ENCODE measurements at regions of chr14 and their contacts with region 1.

Region 1: DNA sequence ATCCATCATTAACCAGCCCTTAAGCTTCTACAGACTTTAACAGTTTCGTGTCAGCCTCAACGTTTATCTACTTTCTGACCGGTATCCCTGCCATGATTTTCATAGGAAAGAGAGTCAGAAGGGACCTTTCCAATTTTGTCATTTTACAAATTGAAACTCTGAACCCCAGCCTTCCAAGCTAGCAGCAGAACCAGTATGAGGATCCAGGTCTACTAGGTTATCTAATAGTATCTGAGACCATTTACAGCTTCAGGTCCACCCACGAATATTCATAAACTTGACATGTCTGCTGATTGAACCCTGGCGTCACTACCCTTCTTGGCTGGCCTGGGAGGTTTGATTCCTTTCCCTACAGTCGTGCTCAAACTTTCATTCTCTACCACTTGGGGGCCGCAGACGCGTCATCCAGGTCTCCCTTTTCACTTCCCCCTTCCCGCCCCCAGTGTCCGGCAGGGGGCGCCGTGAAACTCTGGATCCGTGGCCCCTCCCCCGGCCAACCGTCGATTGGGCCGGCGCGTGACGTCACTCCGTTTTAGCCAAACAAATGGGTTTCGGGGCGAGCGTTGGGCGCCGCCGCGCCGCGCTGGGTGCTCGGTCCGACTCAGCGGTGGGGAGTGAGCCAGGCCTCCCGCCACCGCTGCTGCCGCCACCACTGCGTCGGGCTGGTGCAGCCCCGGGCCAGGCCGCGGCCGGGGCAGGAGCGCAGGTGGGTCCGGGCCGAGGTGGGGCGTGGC is at the start of gene FBXO34:
- DNase-seq: peak; percentile 100
- ATAC-seq: peak; percentile 89
- H3K4me3 Mint-ChIP-seq: peak within 1 kb of the TSS; percentile 90
- H3K27ac Mint-ChIP-seq: peak within 1 kb of the TSS; percentile 87
- H3K4me1 Mint-ChIP-seq: peaks cover 34% of the 10 kb centered on the region
- H3K27me3 Mint-ChIP-seq: no peaks in the 10 kb centered on the region
- CTCF ChIP-seq: peak; percentile 94
- total RNA-seq, gene FBXO34: 19.7 and 20.4 TPM in 2 replicates

Region 2: GRCh38 chr14:54509546-54510501 is 761.2 kb before region 1 on chr14 and contains the start of gene CGRRF1:
- CTCF ChIA-PET with region 1: no interaction called
- POLR2A ChIA-PET with region 1: no interaction called
- intact Hi-C with region 1: loop called (anchors 5 kb)
- DNase-seq: peak; percentile 98
- ATAC-seq: peak; percentile 98
- H3K4me3 Mint-ChIP-seq: peak within 1 kb of the TSS; percentile 95
- H3K27ac Mint-ChIP-seq: peak within 1 kb of the TSS; percentile 89
- H3K4me1 Mint-ChIP-seq: peaks cover 41% of the 10 kb centered on the region
- H3K27me3 Mint-ChIP-seq: no peaks in the 10 kb centered on the region
- CTCF ChIP-seq: no peak
- total RNA-seq, gene CGRRF1: 11.9 and 14.1 TPM in 2 replicates

Region 3: DNA sequence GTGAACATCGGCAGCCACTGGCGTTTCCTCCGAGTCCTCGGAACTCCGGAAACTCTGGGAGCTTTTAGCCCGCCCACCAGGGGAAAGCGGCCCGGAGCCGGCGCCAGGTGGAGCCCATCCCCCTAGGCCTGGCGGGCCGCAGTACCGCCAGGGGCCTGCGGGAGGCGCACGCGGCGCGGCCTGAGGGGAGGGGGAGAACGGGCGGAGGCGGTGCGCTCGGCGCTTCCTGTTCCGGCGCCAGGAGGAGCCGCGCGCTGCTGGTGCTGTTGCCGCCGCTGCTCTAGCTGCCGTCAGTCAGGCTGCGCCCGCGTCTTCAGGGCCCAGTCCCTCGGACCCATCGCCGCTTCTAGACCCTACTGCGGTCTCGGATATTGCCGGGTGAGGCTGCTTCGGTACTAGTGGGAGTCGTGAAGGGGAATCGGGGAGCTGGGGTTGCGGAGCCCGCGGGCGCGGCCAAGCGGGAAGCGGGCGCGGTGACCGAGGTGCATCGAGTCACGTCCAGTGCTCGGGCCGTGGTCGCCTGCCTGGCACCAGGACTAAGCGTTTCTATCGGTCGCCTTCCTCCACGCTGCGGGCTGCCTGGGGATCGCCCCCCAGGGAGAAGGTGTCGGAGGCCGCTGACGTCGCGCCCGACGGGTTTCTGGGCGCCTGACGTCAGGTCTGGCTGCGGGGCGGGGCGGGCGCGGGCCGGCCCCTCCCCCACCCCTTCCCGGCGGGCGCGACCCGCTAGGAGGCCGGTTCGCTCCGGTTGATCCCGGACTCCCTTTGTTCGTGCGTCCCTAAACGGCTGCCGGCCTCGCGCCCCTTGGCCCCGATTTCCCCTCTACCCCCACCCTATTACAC is 219.4 kb before region 1 on chr14 and contains the start of gene MAPK1IP1L:
- CTCF ChIA-PET with region 1: interaction called, 3 read pairs
- POLR2A ChIA-PET with region 1: interaction called, 3 read pairs
- intact Hi-C with region 1: loop called (anchors 1 kb)
- DNase-seq: peak; percentile 97
- ATAC-seq: peak; percentile 94
- H3K4me3 Mint-ChIP-seq: peak within 1 kb of the TSS; percentile 94
- H3K27ac Mint-ChIP-seq: peak within 1 kb of the TSS; percentile 95
- H3K4me1 Mint-ChIP-seq: peaks cover 39% of the 10 kb centered on the region
- H3K27me3 Mint-ChIP-seq: no peaks in the 10 kb centered on the region
- CTCF ChIP-seq: peak; percentile 75
- total RNA-seq, gene MAPK1IP1L: 119 and 130 TPM in 2 replicates

Region 4: GRCh38 chr14:55191203-55192053 is 79.6 kb before region 1 on chr14 and contains the start of gene DLGAP5:
- CTCF ChIA-PET with region 1: no interaction called
- POLR2A ChIA-PET with region 1: no interaction called
- intact Hi-C with region 1: loop called (anchors 2 kb)
- DNase-seq: peak; percentile 68
- ATAC-seq: peak; percentile 99
- H3K4me3 Mint-ChIP-seq: peak within 1 kb of the TSS; percentile 84
- H3K27ac Mint-ChIP-seq: peak within 1 kb of the TSS; percentile 46
- H3K4me1 Mint-ChIP-seq: peaks cover 13% of the 10 kb centered on the region
- H3K27me3 Mint-ChIP-seq: no peaks in the 10 kb centered on the region
- CTCF ChIP-seq: no peak
- total RNA-seq, gene DLGAP5: 0.66 and 0.73 TPM in 2 replicates

Region 5: GRCh38 chr14:55348766-55349453 is 77.9 kb after region 1 on chr14:
- CTCF ChIA-PET with region 1: interaction called, 50 read pairs
- POLR2A ChIA-PET with region 1: interaction called, 6 read pairs
- intact Hi-C with region 1: loop called (anchors 1 kb)
- DNase-seq: no peak
- ATAC-seq: peak; percentile 49
- H3K4me3 Mint-ChIP-seq: peak overlapping the region; percentile 3
- H3K27ac Mint-ChIP-seq: peak overlapping the region; percentile 81
- H3K4me1 Mint-ChIP-seq: peaks cover 42% of the 10 kb centered on the region
- H3K27me3 Mint-ChIP-seq: no peaks in the 10 kb centered on the region
- CTCF ChIP-seq: no peak

Region 6: GRCh38 chr14:55411426-55412389 is 140.7 kb after region 1 on chr14 and contains the start of gene ATG14:
- CTCF ChIA-PET with region 1: interaction called, 3 read pairs
- POLR2A ChIA-PET with region 1: interaction called, 4 read pairs
- intact Hi-C with region 1: loop called (anchors 1 kb)
- DNase-seq: peak; percentile 73
- ATAC-seq: peak; percentile 99
- H3K4me3 Mint-ChIP-seq: peak within 1 kb of the TSS; percentile 93
- H3K27ac Mint-ChIP-seq: peak within 1 kb of the TSS; percentile 76
- H3K4me1 Mint-ChIP-seq: peaks cover 32% of the 10 kb centered on the region
- H3K27me3 Mint-ChIP-seq: peaks cover 12% of the 10 kb centered on the region
- CTCF ChIP-seq: no peak
- total RNA-seq, gene ATG14: 9.7 and 12.1 TPM in 2 replicates

Region 7: GRCh38 chr14:56117765-56118610 is 847.0 kb after region 1 on chr14 and contains the start of gene PELI2:
- CTCF ChIA-PET with region 1: no interaction called
- POLR2A ChIA-PET with region 1: no interaction called
- intact Hi-C with region 1: loop called (anchors 2 kb)
- DNase-seq: peak; percentile 83
- ATAC-seq: peak; percentile 83
- H3K4me3 Mint-ChIP-seq: peak within 1 kb of the TSS; percentile 95
- H3K27ac Mint-ChIP-seq: peak within 1 kb of the TSS; percentile 93
- H3K4me1 Mint-ChIP-seq: peaks cover 54% of the 10 kb centered on the region
- H3K27me3 Mint-ChIP-seq: peaks cover 2% of the 10 kb centered on the region
- CTCF ChIP-seq: no peak
- total RNA-seq, gene PELI2: 5.5 and 6.1 TPM in 2 replicates